Activated naive CD4-positive, alpha-beta T cell treated with anti-CD3 and anti-CD28 coated beads, Interleukin-2, amount 10 ng/mL, durations not matched to agents 7 days and 5 days (primary cell): ENCODE measurements at regions of chr2 and their contacts with region 1.

Region 1: DNA sequence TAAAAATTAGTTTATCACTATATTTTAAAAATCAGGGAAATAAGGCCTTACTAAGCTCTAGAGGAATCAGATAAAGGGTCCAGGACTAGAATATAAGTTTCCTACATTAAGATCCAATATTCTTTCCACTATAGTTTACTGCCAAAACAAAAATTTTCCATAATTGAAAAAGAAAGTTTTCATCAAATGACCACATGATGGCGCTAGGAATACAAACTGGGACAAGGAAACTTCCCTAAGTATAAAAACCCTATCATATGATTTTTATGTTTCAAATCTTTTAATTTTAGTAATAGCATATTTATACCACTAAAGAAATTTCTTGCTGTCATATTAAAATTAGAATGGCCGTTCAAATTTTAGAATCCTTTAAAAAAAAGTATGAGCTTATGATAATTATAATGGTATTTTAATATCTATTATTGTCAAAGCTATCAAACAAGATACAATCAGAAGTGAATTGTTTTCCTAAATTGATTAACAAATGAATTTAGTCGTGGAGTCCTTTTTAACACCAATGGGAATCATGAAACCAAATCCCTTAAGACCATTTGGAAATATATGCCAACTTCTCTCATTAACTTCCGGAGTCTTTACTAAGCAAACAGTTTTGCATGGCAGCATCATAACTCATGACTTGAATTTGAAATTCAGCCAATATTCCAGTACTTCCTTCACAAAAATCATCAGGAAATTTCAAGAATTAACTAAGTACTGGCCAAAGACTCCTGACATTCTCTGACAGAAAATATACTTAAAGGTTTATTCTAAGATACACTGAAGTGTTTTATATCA is 70.3 kb downstream of the SCN1A start:
- DNase-seq: no peak
- H3K4me3 Mint-ChIP-seq: no peak overlapping the region
- H3K27ac Mint-ChIP-seq: no peak overlapping the region
- H3K4me1 Mint-ChIP-seq: no peaks in the 10 kb centered on the region
- H3K27me3 Mint-ChIP-seq: no peaks in the 10 kb centered on the region

Region 2: GRCh38 chr2:166074430-166074829 is 16.9 kb after region 1 on chr2:
- CTCF ChIA-PET with region 1: no interaction called
- DNase-seq: no peak
- H3K4me3 Mint-ChIP-seq: no peak overlapping the region
- H3K27ac Mint-ChIP-seq: no peak overlapping the region
- H3K4me1 Mint-ChIP-seq: no peaks in the 10 kb centered on the region
- H3K27me3 Mint-ChIP-seq: no peaks in the 10 kb centered on the region

Region 3: DNA sequence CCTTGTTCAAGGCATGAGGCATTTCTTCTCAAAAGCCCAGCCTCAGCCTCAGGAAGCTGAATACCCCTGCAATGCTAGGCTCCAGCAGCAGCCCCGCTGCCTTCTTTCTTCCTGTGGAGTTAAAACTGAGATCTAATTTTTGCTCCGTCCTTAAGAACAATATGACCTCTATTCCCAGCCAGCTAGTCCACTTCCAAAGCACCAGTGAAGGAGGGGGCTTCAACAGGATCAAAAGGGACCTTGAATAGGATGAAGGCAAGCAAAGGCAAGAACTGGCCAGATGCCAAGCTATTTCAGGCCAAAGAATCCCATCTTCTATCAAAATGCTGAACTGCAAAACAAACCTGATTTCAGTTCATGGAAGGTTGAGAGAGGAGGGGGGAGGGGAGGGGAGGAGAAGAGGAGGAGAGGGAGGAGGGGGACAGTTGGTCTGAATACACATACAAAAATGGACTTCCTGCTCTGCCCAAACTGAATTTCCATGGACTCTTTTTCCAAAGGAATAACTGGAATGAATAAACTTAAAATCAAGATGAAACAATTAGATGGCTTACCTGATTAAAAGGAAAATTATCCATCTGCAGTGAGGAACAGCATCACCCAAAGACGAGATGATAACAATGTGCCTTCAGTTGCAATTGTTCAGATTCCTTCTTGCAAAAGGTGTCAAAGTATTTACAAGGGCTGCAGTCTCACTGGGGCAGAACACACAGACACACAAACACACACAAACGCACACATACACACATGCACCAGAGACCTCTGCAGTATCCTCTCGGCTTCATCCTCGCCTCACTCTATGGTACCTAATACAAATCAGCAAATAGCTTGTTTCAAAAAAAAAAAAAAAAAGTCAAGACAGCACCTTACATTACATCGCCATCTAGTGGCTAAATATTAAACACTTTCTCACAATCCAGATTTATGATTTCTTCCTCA is 69.9 kb after region 1 on chr2 and contains the start of gene SCN1A:
- CTCF ChIA-PET with region 1: interaction called, 17 read pairs
- DNase-seq: no peak
- H3K4me3 Mint-ChIP-seq: no peak within 1 kb of the TSS
- H3K27ac Mint-ChIP-seq: no peak within 1 kb of the TSS
- H3K4me1 Mint-ChIP-seq: no peaks in the 10 kb centered on the region
- H3K27me3 Mint-ChIP-seq: peaks cover 14% of the 10 kb centered on the region